Left ventricle myocardium inferior (tissue), 1 donor: ENCODE measurements at regions of chr7 and their contacts with region 1.

Region 1: GRCh38 chr7:20598459-20599309 is 16.8 kb upstream of the ABCB5 start:
- DNase-seq: no peak
- H3K4me3 ChIP-seq: peak overlapping the region; percentile 27
- H3K27ac ChIP-seq: no peak overlapping the region
- H3K4me1 ChIP-seq: no peaks in the 10 kb centered on the region
- H3K27me3 ChIP-seq: peaks cover 26% of the 10 kb centered on the region
- CTCF ChIP-seq: peak; percentile 85

Region 2: DNA sequence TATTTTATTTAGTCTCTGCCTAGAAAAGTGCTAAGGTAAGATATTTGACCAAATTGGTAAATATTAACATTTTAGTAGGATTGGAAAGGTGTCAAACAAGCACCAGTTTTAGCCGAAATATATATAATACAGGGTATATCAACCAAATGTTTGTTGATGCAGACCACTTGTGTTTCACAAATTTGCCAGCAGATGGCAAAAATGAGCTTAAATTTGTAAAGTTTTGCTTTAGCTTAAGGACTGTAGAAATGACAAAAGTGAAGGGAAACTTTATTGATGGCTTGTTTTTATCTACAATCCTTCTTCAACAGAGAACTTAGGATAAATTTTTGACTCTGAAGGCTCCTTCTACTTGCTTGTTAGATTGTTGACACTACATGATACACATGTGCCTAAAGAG is 885.0 kb before region 1 on chr7:
- intact Hi-C with region 1: loop called (anchors 10 kb)
- DNase-seq: no peak
- H3K4me3 ChIP-seq: no peak overlapping the region
- H3K27ac ChIP-seq: no peak overlapping the region
- H3K4me1 ChIP-seq: peaks cover 8% of the 10 kb centered on the region
- H3K27me3 ChIP-seq: no peaks in the 10 kb centered on the region
- CTCF ChIP-seq: peak; percentile 64

Region 3: DNA sequence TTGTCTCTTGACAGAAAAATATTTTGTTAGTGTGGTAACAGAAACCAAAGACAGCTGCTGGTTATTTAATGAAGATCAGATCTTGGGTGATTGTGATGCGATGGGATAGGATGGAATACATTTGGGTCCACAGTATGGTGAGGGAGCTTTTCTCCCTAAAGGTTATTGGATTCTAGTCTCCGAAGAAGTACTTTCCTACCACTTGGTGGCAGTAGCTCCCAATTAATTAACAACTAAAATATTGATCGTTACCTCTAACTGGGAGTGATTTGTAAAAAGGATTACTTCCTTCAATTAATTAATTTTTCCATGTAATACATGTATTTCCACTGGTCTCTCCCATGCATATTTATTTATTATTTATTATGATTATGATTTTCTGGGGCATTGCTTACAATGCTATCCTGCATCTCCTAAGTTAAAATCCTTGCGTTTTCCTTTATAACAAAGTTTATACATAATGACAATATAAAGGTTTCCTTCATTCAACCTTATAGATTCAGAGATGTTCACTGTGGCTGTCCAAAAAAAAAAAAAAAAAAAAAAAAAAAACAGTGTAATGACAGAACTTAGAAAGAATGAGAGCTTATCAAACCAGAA is 850.8 kb before region 1 on chr7:
- intact Hi-C with region 1: loop called (anchors 10 kb)
- DNase-seq: no peak
- H3K4me3 ChIP-seq: no peak overlapping the region
- H3K27ac ChIP-seq: no peak overlapping the region
- H3K4me1 ChIP-seq: no peaks in the 10 kb centered on the region
- H3K27me3 ChIP-seq: peaks cover 8% of the 10 kb centered on the region
- CTCF ChIP-seq: peak; percentile 64

Region 4: DNA sequence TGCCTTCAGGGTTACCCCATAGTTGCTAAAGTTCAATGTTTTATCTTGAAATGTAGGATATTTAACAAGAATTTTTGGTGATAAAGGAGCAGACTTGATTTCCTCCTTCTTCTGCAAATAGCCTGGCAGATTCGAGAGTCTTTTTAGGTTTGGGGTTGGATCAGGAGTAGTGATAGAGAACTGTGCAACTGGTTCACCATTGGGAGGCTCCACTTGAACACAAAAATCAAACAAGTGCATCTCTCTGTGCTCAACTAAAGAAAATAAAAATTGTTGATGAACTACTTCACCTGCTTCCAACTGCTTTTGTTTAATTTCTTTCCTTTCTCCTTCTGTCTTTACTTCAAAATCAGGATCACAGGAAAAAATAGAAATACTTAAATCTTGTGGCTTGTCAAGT is 440.0 kb before region 1 on chr7:
- intact Hi-C with region 1: loop called (anchors 5 kb)
- DNase-seq: no peak
- H3K4me3 ChIP-seq: no peak overlapping the region
- H3K27ac ChIP-seq: no peak overlapping the region
- H3K4me1 ChIP-seq: no peaks in the 10 kb centered on the region
- H3K27me3 ChIP-seq: no peaks in the 10 kb centered on the region
- CTCF ChIP-seq: peak; percentile 69

Region 5: GRCh38 chr7:20458521-20458920 is 140.2 kb before region 1 on chr7:
- intact Hi-C with region 1: no loop called
- DNase-seq: no peak
- H3K4me3 ChIP-seq: no peak overlapping the region
- H3K27ac ChIP-seq: no peak overlapping the region
- H3K4me1 ChIP-seq: peaks cover 10% of the 10 kb centered on the region
- H3K27me3 ChIP-seq: no peaks in the 10 kb centered on the region
- CTCF ChIP-seq: no peak

Region 6: GRCh38 chr7:20491284-20491683 is 107.4 kb before region 1 on chr7:
- intact Hi-C with region 1: no loop called
- DNase-seq: no peak
- H3K4me3 ChIP-seq: no peak overlapping the region
- H3K27ac ChIP-seq: no peak overlapping the region
- H3K4me1 ChIP-seq: no peaks in the 10 kb centered on the region
- H3K27me3 ChIP-seq: no peaks in the 10 kb centered on the region
- CTCF ChIP-seq: no peak